GM13976 (cell line): ENCODE measurements at regions of chr17 and their contacts with region 1.

Region 1: GRCh38 chr17:16997521-16998429 is 25.9 kb upstream of the TNFRSF13B start:
- DNase-seq: no peak
- CTCF ChIP-seq: peak; percentile 5

Region 2: DNA sequence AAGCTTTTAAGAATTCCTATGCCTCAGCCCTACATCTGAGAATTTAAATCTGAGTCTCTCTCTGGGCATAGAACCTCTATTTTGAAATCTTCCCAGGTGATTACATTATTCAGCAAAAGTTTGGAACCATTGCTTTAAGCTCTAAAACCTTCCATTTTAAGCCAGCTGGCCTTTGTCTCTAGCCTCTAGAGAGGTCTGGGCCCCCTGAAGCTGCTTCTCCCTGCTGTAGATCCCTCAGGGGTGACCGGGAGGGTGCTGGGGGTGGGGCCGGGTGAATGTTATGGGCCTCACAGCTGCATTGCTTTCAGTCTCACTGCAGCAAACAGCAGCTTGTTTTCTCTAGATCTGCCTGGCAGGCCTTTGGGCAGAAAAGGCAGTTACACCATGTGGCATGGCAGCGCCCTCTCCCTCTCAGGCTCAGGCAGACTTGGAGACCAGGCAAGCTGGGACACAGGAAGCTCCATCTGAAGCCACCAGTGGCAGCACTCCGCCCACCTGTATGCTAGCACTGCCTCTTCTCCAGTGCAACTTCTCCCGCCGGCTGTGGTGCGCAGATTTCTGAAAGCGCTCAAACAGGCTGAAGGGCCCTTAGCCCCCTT is 110.8 kb after region 1 on chr17:
- in situ Hi-C with region 1: no loop called
- DNase-seq: no peak
- CTCF ChIP-seq: no peak

Region 3: GRCh38 chr17:17242081-17242645 is 244.4 kb after region 1 on chr17:
- in situ Hi-C with region 1: no loop called
- DNase-seq: no peak
- CTCF ChIP-seq: no peak

Region 4: GRCh38 chr17:17313350-17313991 is 315.7 kb after region 1 on chr17:
- in situ Hi-C with region 1: loop called (anchors 5 kb)
- DNase-seq: peak; percentile 86
- CTCF ChIP-seq: peak; percentile 72